ENCODE measurements at regions of chr14 and their contacts with region 1.

Region 1: GRCh38 chr14:96363757-96364336 is 521 bp downstream of the GSKIP start:
- DNase-seq: peak; percentile 36
- ATAC-seq: peak; percentile 15 to 63

Region 2: GRCh38 chr14:96391293-96392118 is 27.7 kb after region 1 on chr14:
- intact Hi-C with region 1: loop called in 1 of 2 experiments (anchors 2 kb)
- DNase-seq: peak; percentile 97
- ATAC-seq: peak; percentile 98 to 99

Region 3: DNA sequence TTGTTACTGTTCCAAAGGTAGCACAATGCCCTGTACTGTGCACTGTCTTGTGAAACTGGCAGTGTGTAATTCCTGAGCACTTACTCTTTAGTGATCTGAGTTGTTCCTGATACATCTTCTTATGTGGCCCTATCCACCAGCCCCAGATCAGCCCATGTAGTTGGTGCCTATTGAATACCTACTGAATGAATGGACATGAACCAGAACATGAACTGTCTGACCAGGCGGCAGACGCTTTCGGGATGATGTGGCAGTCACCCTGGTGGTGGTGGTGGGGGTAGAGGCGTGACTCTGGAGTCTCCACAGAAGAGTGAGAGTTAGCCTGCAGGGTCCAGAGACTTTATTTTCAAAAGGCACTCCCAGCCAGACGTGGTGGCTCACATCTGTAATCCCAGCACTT is 91.7 kb after region 1 on chr14:
- intact Hi-C with region 1: no loop called
- DNase-seq: no peak
- ATAC-seq: no peak